WTC11 (cell line): ENCODE measurements at regions of chr1 and their contacts with region 1.

Region 1: GRCh38 chr1:181073638-181074037 is 14.9 kb upstream of the IER5 start:
- DNase-seq: no peak
- ATAC-seq: no peak
- H3K4me3 Mint-ChIP-seq: no peak overlapping the region
- H3K27ac Mint-ChIP-seq: no peak overlapping the region
- H3K4me1 Mint-ChIP-seq: peaks cover 24% of the 10 kb centered on the region
- H3K27me3 Mint-ChIP-seq: peaks cover 2% of the 10 kb centered on the region; the same call in 1 of the 2 replicates
- CTCF ChIP-seq: no peak

Region 2: GRCh38 chr1:180849036-180849775 is 224.4 kb before region 1 on chr1:
- CTCF ChIA-PET with region 1: no interaction called
- POLR2A ChIA-PET with region 1: no interaction called
- DNase-seq: no peak
- ATAC-seq: no peak
- H3K4me3 Mint-ChIP-seq: no peak overlapping the region
- H3K27ac Mint-ChIP-seq: no peak overlapping the region
- H3K4me1 Mint-ChIP-seq: peaks cover 10% of the 10 kb centered on the region
- H3K27me3 Mint-ChIP-seq: no peaks in the 10 kb centered on the region
- CTCF ChIP-seq: no peak

Region 3: GRCh38 chr1:181021811-181022434 is 51.7 kb before region 1 on chr1:
- CTCF ChIA-PET with region 1: no interaction called
- POLR2A ChIA-PET with region 1: interaction called, 10 read pairs
- DNase-seq: peak; percentile 50
- ATAC-seq: peak; percentile 5
- H3K4me3 Mint-ChIP-seq: peak overlapping the region; percentile 96
- H3K27ac Mint-ChIP-seq: peak overlapping the region; percentile 96
- H3K4me1 Mint-ChIP-seq: peaks cover 21% of the 10 kb centered on the region
- H3K27me3 Mint-ChIP-seq: peaks cover 9% of the 10 kb centered on the region
- CTCF ChIP-seq: no peak